Endothelial cell of umbilical vein (primary cell): ENCODE measurements at regions of chr6 and their contacts with region 1.

Region 1: GRCh38 chr6:122947355-122947754 is 48.7 kb upstream of the CLVS2 start:
- DNase-seq: peak; percentile 2
- H3K4me3 ChIP-seq: no peak overlapping the region
- H3K27ac ChIP-seq: no peak overlapping the region
- H3K4me1 ChIP-seq: no peaks in the 10 kb centered on the region
- H3K27me3 ChIP-seq: no peaks in the 10 kb centered on the region
- CTCF ChIP-seq: peak; percentile 5 to 13
- POLR2A ChIP-seq: no peak

Region 2: DNA sequence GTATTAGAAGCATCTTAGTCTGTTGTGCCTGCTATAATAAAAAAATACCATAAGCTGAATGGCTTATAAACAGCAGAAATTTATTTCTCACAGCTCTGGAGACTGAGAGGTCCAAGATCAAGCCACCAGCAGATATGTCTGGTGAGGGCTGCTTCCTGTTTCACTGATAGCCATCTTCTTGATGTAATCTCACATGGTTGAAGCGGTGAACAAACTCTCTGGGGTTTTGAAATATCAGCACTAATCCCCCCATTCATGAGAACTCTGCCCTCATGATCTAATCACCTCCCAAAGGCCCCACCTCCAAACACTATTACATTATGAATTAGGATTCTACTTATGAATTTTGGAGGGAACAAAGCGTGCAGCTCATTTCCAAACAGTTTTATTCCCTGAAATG is 37.0 kb after region 1 on chr6:
- CTCF ChIA-PET with region 1: no interaction called
- POLR2A ChIA-PET with region 1: no interaction called
- dilution Hi-C with region 1: no loop called
- intact Hi-C with region 1: no loop called
- DNase-seq: no peak
- H3K4me3 ChIP-seq: no peak overlapping the region
- H3K27ac ChIP-seq: no peak overlapping the region
- H3K4me1 ChIP-seq: no peaks in the 10 kb centered on the region
- H3K27me3 ChIP-seq: no peaks in the 10 kb centered on the region
- CTCF ChIP-seq: no peak
- POLR2A ChIP-seq: no peak

Region 3: GRCh38 chr6:123316733-123317323 is 369.5 kb after region 1 on chr6:
- CTCF ChIA-PET with region 1: interaction called, 4 read pairs
- POLR2A ChIA-PET with region 1: no interaction called
- dilution Hi-C with region 1: no loop called
- intact Hi-C with region 1: loop called (anchors 1 kb)
- DNase-seq: peak; percentile 14
- H3K4me3 ChIP-seq: no peak overlapping the region
- H3K27ac ChIP-seq: no peak overlapping the region
- H3K4me1 ChIP-seq: no peaks in the 10 kb centered on the region
- H3K27me3 ChIP-seq: peaks cover 0 to 3% of the 10 kb centered on the region in 2 experiments
- CTCF ChIP-seq: no peak
- POLR2A ChIP-seq: no peak